ENCODE measurements at regions of chr16 and their contacts with region 1.

Region 1: GRCh38 chr16:1044460-1045312 is 27.9 kb upstream of the SSTR5 start:
- DNase-seq: no peak
- H3K4me3 ChIP-seq: peak overlapping the region in 1 of 3 donors; percentile 13
- H3K27ac ChIP-seq: no peak overlapping the region
- H3K4me1 ChIP-seq: no peaks in the 10 kb centered on the region
- H3K27me3 ChIP-seq: peaks cover 12 to 80% of the 10 kb centered on the region in 2 donors
- CTCF ChIP-seq: no peak
- POLR2A ChIP-seq: no peak

Region 2: DNA sequence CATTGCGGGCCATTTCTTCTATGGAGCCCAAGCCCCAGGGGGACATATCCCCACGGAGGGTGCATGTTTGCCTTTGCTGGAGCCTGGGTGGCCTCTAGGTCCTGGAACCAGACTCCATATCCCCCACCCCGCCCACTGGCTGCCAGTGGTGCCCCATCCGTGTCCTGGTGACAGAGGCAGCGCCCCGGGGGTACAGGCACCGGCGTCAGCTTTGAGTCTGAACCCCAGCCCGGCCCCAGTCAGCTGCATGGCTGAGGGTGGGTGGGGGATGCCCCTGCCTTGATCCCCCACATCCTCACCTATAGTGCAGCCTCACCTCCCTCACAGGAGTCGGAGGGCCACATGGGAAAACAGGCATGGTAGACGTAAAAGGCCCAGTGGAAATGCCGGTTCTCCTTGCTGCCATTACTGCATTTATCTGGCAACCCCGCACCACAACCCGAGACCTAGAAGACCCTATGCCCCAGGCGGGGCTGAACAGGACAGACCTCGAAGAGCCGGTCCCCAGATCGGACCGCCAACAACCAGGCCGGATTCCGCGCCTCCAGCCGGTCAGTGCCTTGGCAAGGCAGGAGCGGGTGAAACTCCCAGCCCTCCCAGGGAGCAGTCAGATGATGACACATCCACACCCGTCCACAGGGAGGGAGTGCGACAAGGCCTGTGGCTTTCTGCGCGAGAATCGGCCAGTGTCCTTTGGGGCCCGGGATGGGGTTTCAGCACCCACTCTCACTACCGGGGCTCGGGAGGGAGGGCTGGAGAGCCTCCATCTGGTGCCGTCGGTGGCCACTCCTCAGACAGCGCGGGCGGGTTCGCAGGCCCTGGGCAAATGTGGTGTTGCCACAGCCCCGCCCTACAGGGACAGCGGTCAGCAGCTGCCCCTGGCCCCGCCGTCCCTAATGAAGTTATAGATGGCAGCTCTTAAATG is 16.0 kb after region 1 on chr16:
- intact Hi-C with region 1: loop called (anchors 1 kb)
- DNase-seq: no peak
- H3K4me3 ChIP-seq: no peak overlapping the region
- H3K27ac ChIP-seq: no peak overlapping the region
- H3K4me1 ChIP-seq: no peaks in the 10 kb centered on the region
- H3K27me3 ChIP-seq: peaks cover 7 to 75% of the 10 kb centered on the region in 2 donors
- CTCF ChIP-seq: no peak
- POLR2A ChIP-seq: no peak

Measured in breast epithelium (tissue), 4 donors.